ENCODE measurements at regions of chr10 and their contacts with region 1.

Region 1: GRCh38 chr10:98170249-98171117 is 36.0 kb downstream of the R3HCC1L start:
- DNase-seq: peak; percentile 19
- ATAC-seq: peak; percentile 82
- H3K4me3 ChIP-seq: no peak overlapping the region
- H3K27ac ChIP-seq: no peak overlapping the region
- H3K4me1 ChIP-seq: peaks cover 24% of the 10 kb centered on the region
- H3K27me3 ChIP-seq: no peaks in the 10 kb centered on the region
- CTCF ChIP-seq: peak; percentile 71 to 76 (median 75)
- EP300 ChIP-seq: no peak
- POLR2A ChIP-seq: no peak
- RAD21 ChIP-seq: peak; percentile 62

Region 2: DNA sequence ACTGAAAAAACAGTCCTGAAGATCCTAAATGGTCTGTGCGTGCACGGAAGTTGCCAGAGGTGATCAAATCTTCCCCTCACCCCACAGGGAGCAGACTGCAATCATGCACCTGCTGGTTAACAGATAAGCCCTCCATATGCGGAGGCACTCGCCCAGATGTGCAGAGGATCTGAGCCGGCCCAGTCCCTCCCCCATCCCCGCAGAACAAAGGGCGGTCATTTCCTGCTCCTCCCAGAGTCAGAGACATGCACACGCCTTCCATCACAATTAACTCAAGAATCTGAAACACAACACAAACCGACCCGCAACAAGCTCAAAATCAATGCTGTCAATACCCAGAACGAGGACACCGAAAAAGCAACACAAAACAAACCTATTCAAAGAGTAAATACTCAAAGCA is 164.2 kb before region 1 on chr10:
- CTCF ChIA-PET with region 1: no interaction called
- POLR2A ChIA-PET with region 1: no interaction called
- RAD21 ChIA-PET with region 1: no interaction called
- SMC1A ChIA-PET with region 1: no interaction called
- in situ Hi-C with region 1: no loop called
- intact Hi-C with region 1: no loop called
- DNase-seq: no peak
- ATAC-seq: no peak
- H3K4me3 ChIP-seq: no peak overlapping the region
- H3K27ac ChIP-seq: no peak overlapping the region
- H3K4me1 ChIP-seq: no peaks in the 10 kb centered on the region
- H3K27me3 ChIP-seq: peaks cover 0 to 2% of the 10 kb centered on the region in 2 experiments; a peak in 2 of 4 replicates
- CTCF ChIP-seq: no peak
- EP300 ChIP-seq: no peak
- POLR2A ChIP-seq: no peak
- RAD21 ChIP-seq: no peak

Region 3: GRCh38 chr10:98141484-98142073 is 28.9 kb before region 1 on chr10:
- CTCF ChIA-PET with region 1: interaction called, 25 read pairs
- POLR2A ChIA-PET with region 1: interaction called, 3 read pairs
- RAD21 ChIA-PET with region 1: interaction called, 4 read pairs
- SMC1A ChIA-PET with region 1: interaction called, 10 read pairs
- in situ Hi-C with region 1: no loop called
- intact Hi-C with region 1: no loop called
- DNase-seq: no peak
- ATAC-seq: peak; percentile 29
- H3K4me3 ChIP-seq: no peak overlapping the region
- H3K27ac ChIP-seq: no peak overlapping the region
- H3K4me1 ChIP-seq: peaks cover 19% of the 10 kb centered on the region; the same call in 1 of the 2 replicates
- H3K27me3 ChIP-seq: no peaks in the 10 kb centered on the region
- CTCF ChIP-seq: no peak
- EP300 ChIP-seq: no peak
- POLR2A ChIP-seq: no peak
- RAD21 ChIP-seq: no peak

Region 4: GRCh38 chr10:98205351-98205750 is 34.9 kb after region 1 on chr10:
- CTCF ChIA-PET with region 1: interaction called, 12 read pairs
- POLR2A ChIA-PET with region 1: no interaction called
- RAD21 ChIA-PET with region 1: no interaction called
- SMC1A ChIA-PET with region 1: interaction called, 3 read pairs
- in situ Hi-C with region 1: no loop called
- intact Hi-C with region 1: no loop called
- DNase-seq: no peak
- ATAC-seq: no peak
- H3K4me3 ChIP-seq: no peak overlapping the region
- H3K27ac ChIP-seq: no peak overlapping the region
- H3K4me1 ChIP-seq: no peaks in the 10 kb centered on the region
- H3K27me3 ChIP-seq: no peaks in the 10 kb centered on the region
- CTCF ChIP-seq: no peak
- EP300 ChIP-seq: no peak
- POLR2A ChIP-seq: no peak
- RAD21 ChIP-seq: no peak

Region 5: GRCh38 chr10:98262571-98262970 is 92.1 kb after region 1 on chr10:
- CTCF ChIA-PET with region 1: no interaction called
- POLR2A ChIA-PET with region 1: no interaction called
- RAD21 ChIA-PET with region 1: no interaction called
- SMC1A ChIA-PET with region 1: no interaction called
- in situ Hi-C with region 1: no loop called
- intact Hi-C with region 1: no loop called
- DNase-seq: no peak
- ATAC-seq: peak; percentile 80
- H3K4me3 ChIP-seq: no peak overlapping the region
- H3K27ac ChIP-seq: no peak overlapping the region
- H3K4me1 ChIP-seq: no peaks in the 10 kb centered on the region
- H3K27me3 ChIP-seq: peaks cover 0 to 4% of the 10 kb centered on the region in 2 experiments; a peak in 2 of 4 replicates
- CTCF ChIP-seq: peak in 2 of 3 experiments; percentile 37 to 39; a peak in 3 of 6 replicates
- EP300 ChIP-seq: no peak
- POLR2A ChIP-seq: no peak
- RAD21 ChIP-seq: peak; percentile 49

Region 6: GRCh38 chr10:98309366-98310355 is 139.2 kb after region 1 on chr10:
- CTCF ChIA-PET with region 1: interaction called, 42 read pairs
- POLR2A ChIA-PET with region 1: no interaction called
- RAD21 ChIA-PET with region 1: interaction called, 13 read pairs
- SMC1A ChIA-PET with region 1: interaction called, 16 read pairs
- in situ Hi-C with region 1: no loop called
- intact Hi-C with region 1: loop called (anchors 1 kb)
- DNase-seq: no peak
- ATAC-seq: peak; percentile 82
- H3K4me3 ChIP-seq: no peak overlapping the region
- H3K27ac ChIP-seq: no peak overlapping the region
- H3K4me1 ChIP-seq: no peaks in the 10 kb centered on the region
- H3K27me3 ChIP-seq: peaks cover 2% of the 10 kb centered on the region in 2 experiments
- CTCF ChIP-seq: peak; percentile 59 to 66 (median 63)
- EP300 ChIP-seq: no peak
- POLR2A ChIP-seq: no peak
- RAD21 ChIP-seq: peak; percentile 66

Region 7: DNA sequence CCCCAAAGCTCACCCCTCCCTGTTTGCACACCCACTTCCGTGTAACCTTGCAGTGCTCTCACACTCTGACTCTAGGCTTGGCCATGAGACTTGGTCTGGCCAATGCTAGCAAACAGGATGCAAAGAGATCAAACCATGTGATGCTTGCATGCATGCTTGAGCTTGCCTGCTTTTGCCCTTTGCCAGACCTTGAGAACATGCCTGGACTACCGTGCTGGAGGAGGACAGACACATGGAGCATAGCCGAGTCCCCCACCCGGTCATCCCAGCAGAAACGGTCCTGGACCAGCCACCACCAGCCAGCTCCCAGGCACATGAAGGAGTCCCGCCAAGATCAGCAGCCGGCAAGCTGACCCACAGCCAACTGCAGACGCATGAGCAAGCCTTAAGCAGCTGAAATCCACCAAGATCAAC is 221.1 kb after region 1 on chr10:
- CTCF ChIA-PET with region 1: interaction called, 16 read pairs
- POLR2A ChIA-PET with region 1: no interaction called
- RAD21 ChIA-PET with region 1: no interaction called
- SMC1A ChIA-PET with region 1: interaction called, 5 read pairs
- in situ Hi-C with region 1: no loop called
- intact Hi-C with region 1: loop called (anchors 5 kb)
- DNase-seq: no peak
- ATAC-seq: peak; percentile 67
- H3K4me3 ChIP-seq: no peak overlapping the region
- H3K27ac ChIP-seq: no peak overlapping the region
- H3K4me1 ChIP-seq: peaks cover 16% of the 10 kb centered on the region
- H3K27me3 ChIP-seq: no peaks in the 10 kb centered on the region
- CTCF ChIP-seq: no peak
- EP300 ChIP-seq: no peak
- POLR2A ChIP-seq: no peak
- RAD21 ChIP-seq: no peak

Region 8: DNA sequence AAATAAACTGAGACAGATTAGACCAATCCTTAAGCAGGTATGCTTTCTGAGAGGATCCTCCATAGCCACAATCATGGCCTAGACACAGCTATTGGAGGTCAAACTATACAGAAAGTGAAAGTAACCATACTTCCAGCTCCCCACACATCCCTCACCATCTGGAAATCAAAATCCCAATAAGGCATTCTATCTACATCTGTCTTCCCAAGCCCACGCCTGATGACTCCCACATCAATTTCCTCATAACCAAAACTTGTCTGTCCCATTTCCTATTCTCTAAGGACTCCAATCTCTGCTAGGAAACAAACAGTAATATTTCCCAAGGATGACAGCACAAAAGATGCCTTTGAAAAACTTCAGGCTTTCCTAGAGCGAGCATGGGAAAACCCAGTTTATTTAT is 523.5 kb after region 1 on chr10:
- CTCF ChIA-PET with region 1: no interaction called
- POLR2A ChIA-PET with region 1: no interaction called
- RAD21 ChIA-PET with region 1: no interaction called
- SMC1A ChIA-PET with region 1: no interaction called
- in situ Hi-C with region 1: no loop called
- intact Hi-C with region 1: no loop called
- DNase-seq: no peak
- ATAC-seq: no peak
- H3K4me3 ChIP-seq: no peak overlapping the region
- H3K27ac ChIP-seq: no peak overlapping the region
- H3K4me1 ChIP-seq: no peaks in the 10 kb centered on the region
- H3K27me3 ChIP-seq: no peaks in the 10 kb centered on the region; a peak in 1 of 4 replicates
- CTCF ChIP-seq: no peak
- EP300 ChIP-seq: no peak
- POLR2A ChIP-seq: no peak
- RAD21 ChIP-seq: no peak

Measured in GM12878 (cell line).